HepG2 (cell line): ENCODE measurements at regions of chr6 and their contacts with region 1.

Region 1: DNA sequence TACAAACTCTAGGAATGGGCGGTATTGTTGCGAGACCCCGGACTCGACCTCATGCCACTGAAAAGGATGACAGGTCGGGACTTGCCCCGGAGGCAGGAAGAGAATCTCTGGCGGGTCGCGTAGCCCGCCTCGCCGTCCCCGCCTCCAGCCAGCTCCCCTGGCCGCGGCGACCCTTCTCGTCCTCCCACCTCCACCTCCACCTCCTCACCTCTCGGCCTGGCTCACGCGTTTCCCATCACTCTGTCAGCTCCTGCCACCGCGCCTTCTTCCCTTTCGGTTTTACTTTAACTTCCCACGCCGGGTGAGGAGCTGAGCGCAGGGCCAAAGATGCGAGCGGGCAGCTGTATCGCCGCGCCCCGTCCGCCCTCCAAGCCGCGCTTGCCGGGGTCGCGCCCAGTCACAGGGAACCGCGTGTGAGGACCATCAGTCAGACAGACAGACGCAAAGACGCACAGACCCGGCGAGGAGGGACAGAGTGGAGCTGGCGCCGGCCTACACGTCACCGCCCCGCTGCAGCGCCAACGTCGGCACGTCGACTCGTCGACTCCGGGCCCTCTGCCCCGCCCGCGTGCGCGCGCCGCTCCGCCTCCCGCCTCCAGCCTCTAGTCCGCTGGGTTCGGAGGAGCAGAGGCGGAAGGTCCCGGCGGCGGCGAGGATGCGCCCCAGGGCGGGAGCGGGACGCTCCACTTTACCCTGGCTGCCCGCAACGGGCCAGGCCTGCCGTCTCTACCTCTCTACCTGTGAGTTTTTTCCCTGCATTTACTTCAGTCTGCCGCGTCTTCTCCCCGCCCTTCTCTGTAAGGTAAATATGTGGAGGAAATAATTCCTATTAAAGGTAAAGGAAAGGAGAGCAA is at the start of gene ASCC3:
- DNase-seq: peak; percentile 78
- ATAC-seq: peak; percentile 98
- H3K4me3 ChIP-seq: peak within 1 kb of the TSS; percentile 89 to 98 (median 93)
- H3K27ac ChIP-seq: peak within 1 kb of the TSS; percentile 89
- H3K4me1 ChIP-seq: peaks cover 53% of the 10 kb centered on the region
- H3K27me3 ChIP-seq: peaks cover 0 to 2% of the 10 kb centered on the region in 2 experiments; a peak in 1 of 5 replicates
- CTCF ChIP-seq: 0 out of 2 replicates have a peak, but pooled peaks have one; percentile 14
- EP300 ChIP-seq: no peak
- POLR2A ChIP-seq: peak; percentile 73 to 90
- RAD21 ChIP-seq: 0 out of 2 replicates have a peak, but pooled peaks have one; percentile 14
- total RNA-seq, gene ASCC3: 55.7 and 84.7 TPM in 2 replicates

Region 2: DNA sequence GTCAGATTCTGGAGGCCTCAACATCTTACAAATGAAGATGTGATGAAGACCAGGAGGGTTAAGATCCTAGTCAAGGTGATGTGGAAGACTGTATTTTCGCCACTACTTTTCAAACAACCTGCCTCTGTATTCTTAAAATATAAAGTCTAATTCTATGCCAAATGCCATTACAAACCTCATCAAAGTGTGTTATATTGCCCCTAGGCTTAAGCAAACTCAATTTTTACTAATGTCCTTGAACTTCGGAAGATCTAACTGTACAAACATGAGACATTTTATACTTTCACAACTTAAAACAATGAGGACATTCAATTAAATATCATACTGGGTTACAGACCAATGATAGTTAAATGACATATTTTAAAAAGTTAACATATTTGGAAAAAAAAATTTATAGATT is 19.0 kb before region 1 on chr6:
- CTCF ChIA-PET with region 1: no interaction called
- POLR2A ChIA-PET with region 1: interaction called, 3 read pairs
- in situ Hi-C with region 1: no loop called
- intact Hi-C with region 1: loop called (anchors 2 kb)
- DNase-seq: peak; percentile 84
- ATAC-seq: peak; percentile 71
- H3K4me3 ChIP-seq: no peak overlapping the region
- H3K27ac ChIP-seq: peak overlapping the region; percentile 40
- H3K4me1 ChIP-seq: peaks cover 30% of the 10 kb centered on the region
- H3K27me3 ChIP-seq: no peaks in the 10 kb centered on the region
- CTCF ChIP-seq: no peak
- EP300 ChIP-seq: 0 out of 4 replicates have a peak, but pooled peaks of 1 of the 2 experiments have one; percentile 41
- POLR2A ChIP-seq: no peak
- RAD21 ChIP-seq: no peak

Region 3: DNA sequence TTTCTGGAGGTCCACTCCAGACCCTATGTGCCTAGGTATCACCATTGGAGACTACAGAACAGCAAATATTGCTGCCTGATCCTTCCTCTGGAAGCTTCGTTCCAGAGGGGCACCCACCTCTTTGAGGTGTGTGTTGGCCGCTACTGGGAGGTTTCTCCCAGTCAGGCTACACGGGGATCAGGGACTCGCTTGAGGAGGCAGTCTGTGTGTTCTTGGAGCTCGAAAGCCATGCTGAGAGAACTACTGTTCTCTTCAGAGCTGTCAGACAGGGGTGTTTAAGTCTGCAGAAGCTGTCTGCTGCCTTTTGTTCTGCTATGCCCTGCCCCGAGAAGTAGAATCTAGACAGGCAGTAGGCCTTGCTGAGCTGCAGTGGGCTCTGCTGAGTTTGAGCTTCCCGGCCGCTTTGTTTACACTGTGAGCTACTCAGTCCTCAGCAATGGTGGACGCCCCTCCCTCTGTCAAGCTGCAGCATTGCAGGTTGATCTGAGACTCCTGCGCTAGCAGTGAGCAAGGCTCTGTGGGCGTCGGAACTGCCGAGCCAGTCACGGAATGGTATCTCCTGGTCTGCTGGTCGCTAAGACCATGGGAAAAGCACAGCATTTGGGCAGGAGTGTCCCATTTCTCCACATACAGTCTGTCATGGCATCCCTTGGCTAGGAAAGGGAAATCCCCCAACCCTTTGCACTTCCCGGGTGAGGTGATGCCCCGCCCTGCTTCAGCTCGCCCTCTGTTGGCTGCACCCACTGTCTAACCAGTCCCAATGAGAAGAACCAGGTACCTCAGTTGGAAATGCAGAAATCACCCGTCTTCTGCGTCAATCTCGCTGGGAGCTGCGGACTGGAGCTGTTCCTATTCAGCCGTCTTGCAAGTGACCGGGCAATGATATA is 32.6 kb after region 1 on chr6:
- CTCF ChIA-PET with region 1: no interaction called
- POLR2A ChIA-PET with region 1: interaction called, 3 read pairs
- in situ Hi-C with region 1: no loop called
- intact Hi-C with region 1: loop called (anchors 2 kb)
- DNase-seq: peak; percentile 50
- ATAC-seq: peak; percentile 100
- H3K4me3 ChIP-seq: peak overlapping the region; percentile 46 to 67 (median 52); a peak in 5 of 6 replicates
- H3K27ac ChIP-seq: no peak overlapping the region
- H3K4me1 ChIP-seq: no peaks in the 10 kb centered on the region
- H3K27me3 ChIP-seq: no peaks in the 10 kb centered on the region
- CTCF ChIP-seq: peak; percentile 65
- EP300 ChIP-seq: no peak
- POLR2A ChIP-seq: no peak
- RAD21 ChIP-seq: no peak

Region 4: GRCh38 chr6:100948381-100949133 is 67.5 kb after region 1 on chr6:
- CTCF ChIA-PET with region 1: no interaction called
- POLR2A ChIA-PET with region 1: no interaction called
- in situ Hi-C with region 1: no loop called
- intact Hi-C with region 1: loop called (anchors 1 kb)
- DNase-seq: peak; percentile 92
- ATAC-seq: peak; percentile 99
- H3K4me3 ChIP-seq: no peak overlapping the region
- H3K27ac ChIP-seq: no peak overlapping the region
- H3K4me1 ChIP-seq: peaks cover 12% of the 10 kb centered on the region
- H3K27me3 ChIP-seq: peaks cover 0 to 14% of the 10 kb centered on the region in 2 experiments; a peak in 2 of 5 replicates
- CTCF ChIP-seq: no peak
- EP300 ChIP-seq: peak in 1 of 2 experiments; percentile 46; a peak in 1 of 4 replicates
- POLR2A ChIP-seq: no peak
- RAD21 ChIP-seq: no peak

Region 5: GRCh38 chr6:101013612-101014195 is 132.6 kb after region 1 on chr6:
- CTCF ChIA-PET with region 1: no interaction called
- POLR2A ChIA-PET with region 1: no interaction called
- in situ Hi-C with region 1: no loop called
- intact Hi-C with region 1: no loop called
- DNase-seq: no peak
- ATAC-seq: no peak
- H3K4me3 ChIP-seq: no peak overlapping the region
- H3K27ac ChIP-seq: no peak overlapping the region
- H3K4me1 ChIP-seq: no peaks in the 10 kb centered on the region
- H3K27me3 ChIP-seq: no peaks in the 10 kb centered on the region
- CTCF ChIP-seq: no peak
- EP300 ChIP-seq: no peak
- POLR2A ChIP-seq: no peak
- RAD21 ChIP-seq: no peak